Sigmoid colon (tissue), 7 donors: ENCODE measurements at regions of chr16 and their contacts with region 1.

Region 1: DNA sequence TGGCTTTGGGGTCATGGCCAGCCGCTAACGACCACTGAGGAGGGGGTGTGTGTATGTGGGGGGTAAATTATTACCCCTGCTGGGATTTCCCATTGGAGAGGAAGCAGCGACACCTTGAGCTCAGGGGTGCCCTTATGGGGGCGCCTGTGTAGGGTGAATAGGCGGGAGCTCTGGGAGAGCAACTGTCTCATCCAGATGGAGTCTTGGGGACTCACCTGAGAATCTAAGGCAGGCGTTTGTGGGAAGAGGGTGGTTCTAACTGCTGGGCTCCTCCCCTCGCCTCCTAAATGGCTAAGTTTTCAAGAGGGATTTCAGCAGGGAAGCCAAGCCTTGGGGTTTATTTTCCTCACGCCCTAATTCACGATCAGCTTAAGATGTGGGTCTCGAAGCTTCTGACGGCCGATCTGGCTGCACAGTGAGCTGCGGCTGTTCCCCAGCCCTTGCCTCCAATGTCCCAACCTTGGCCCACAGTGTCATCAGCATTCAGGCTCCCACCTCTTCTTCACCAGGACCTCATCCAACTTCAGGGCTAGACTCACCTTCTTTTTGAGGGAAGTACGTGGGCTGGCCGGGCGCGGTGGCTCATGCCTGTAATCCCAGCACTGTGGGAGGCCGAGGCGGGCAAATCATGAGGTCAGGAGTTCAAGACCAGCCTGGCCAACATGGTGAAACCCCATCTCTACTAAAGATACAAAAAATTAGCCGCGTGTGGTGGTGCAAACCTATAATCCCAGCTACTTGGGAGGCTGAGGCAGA is 136.9 kb upstream of the EEF2KMT start:
- DNase-seq: peak; percentile 22
- H3K4me3 ChIP-seq: no peak overlapping the region
- H3K27ac ChIP-seq: no peak overlapping the region
- H3K4me1 ChIP-seq: no peaks in the 10 kb centered on the region
- H3K27me3 ChIP-seq: peaks cover 0 to 6% (median 0%) of the 10 kb centered on the region in 3 donors
- CTCF ChIP-seq: no peak
- EP300 ChIP-seq: no peak
- POLR2A ChIP-seq: no peak

Region 2: GRCh38 chr16:4820652-4821051 is 413.8 kb before region 1 on chr16:
- intact Hi-C with region 1: no loop called
- DNase-seq: no peak
- H3K4me3 ChIP-seq: no peak overlapping the region
- H3K27ac ChIP-seq: no peak overlapping the region
- H3K4me1 ChIP-seq: no peaks in the 10 kb centered on the region
- H3K27me3 ChIP-seq: no peaks in the 10 kb centered on the region
- CTCF ChIP-seq: no peak
- EP300 ChIP-seq: no peak
- POLR2A ChIP-seq: no peak

Region 3: DNA sequence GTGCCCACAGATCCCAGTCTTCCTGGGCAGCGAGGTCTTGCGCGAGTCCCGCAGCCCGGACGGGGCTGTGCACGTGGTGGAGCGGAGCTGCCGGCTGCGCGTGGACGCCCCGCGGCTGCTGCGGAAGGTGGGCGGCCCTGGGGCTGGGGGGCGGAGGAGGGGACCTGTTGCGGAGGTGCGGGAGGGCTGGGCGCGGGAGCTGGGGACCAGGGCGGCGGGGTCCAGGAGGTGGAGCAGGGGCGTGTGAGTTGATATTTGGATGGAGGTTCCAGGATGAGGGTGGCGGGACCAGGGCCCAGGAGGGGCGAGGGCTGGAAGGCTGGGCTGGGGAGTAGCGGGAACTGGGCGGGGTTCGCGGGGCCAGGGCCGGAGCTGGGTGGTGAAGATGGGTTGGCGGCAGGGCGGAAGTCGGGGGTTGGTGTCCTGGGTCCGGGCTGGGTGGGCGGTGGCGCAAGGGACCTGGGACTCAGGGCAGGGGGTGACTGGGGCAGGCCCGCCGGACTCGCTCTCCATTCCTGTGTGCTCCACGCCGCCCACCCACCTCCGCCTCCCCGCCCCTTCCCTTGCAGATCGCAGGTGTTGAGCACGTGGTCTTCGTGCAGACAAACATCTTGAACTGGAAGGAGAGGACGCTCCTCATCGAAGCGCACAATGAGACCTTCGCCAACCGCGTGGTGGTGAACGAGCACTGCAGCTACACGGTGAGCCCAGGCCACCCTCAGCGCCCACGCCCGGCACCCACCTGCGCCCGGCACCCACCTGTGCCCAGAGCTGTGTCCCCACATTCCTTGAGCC is 246.7 kb before region 1 on chr16:
- intact Hi-C with region 1: no loop called
- DNase-seq: no peak
- H3K4me3 ChIP-seq: no peak overlapping the region
- H3K27ac ChIP-seq: no peak overlapping the region
- H3K4me1 ChIP-seq: peaks cover 0 to 6% (median 6%) of the 10 kb centered on the region in 4 donors
- H3K27me3 ChIP-seq: peaks cover 18 to 59% (median 30%) of the 10 kb centered on the region in 3 donors
- CTCF ChIP-seq: no peak
- EP300 ChIP-seq: no peak
- POLR2A ChIP-seq: no peak

Region 4: DNA sequence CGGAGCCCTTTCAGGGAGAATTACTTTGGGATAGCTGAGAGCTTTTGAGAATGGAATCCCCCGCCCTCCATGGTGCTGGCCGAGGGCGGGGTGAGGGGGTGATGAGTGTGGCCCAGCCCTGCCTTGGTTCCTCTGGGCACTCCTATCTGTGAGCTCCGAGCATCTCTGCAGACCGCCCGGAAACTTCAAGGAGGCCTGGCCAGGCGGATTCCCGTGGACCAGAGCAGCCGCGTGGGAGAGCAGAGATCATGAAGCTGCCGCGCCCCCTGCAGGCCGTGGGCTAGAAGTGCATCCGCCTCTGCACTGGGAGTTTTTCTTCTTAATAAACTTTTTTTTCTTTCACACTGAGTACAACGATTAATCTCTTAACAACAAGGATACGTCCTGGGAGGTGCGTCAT is 256.0 kb after region 1 on chr16:
- intact Hi-C with region 1: loop called (anchors 5 kb)
- DNase-seq: no peak
- H3K4me3 ChIP-seq: no peak overlapping the region
- H3K27ac ChIP-seq: no peak overlapping the region
- H3K4me1 ChIP-seq: no peaks in the 10 kb centered on the region
- H3K27me3 ChIP-seq: no peaks in the 10 kb centered on the region
- CTCF ChIP-seq: peak in 3 of 4 experiments; percentile 32 to 58 (median 56)
- EP300 ChIP-seq: no peak
- POLR2A ChIP-seq: no peak